ENCODE measurements at regions of chr1 and their contacts with region 1.

Region 1: DNA sequence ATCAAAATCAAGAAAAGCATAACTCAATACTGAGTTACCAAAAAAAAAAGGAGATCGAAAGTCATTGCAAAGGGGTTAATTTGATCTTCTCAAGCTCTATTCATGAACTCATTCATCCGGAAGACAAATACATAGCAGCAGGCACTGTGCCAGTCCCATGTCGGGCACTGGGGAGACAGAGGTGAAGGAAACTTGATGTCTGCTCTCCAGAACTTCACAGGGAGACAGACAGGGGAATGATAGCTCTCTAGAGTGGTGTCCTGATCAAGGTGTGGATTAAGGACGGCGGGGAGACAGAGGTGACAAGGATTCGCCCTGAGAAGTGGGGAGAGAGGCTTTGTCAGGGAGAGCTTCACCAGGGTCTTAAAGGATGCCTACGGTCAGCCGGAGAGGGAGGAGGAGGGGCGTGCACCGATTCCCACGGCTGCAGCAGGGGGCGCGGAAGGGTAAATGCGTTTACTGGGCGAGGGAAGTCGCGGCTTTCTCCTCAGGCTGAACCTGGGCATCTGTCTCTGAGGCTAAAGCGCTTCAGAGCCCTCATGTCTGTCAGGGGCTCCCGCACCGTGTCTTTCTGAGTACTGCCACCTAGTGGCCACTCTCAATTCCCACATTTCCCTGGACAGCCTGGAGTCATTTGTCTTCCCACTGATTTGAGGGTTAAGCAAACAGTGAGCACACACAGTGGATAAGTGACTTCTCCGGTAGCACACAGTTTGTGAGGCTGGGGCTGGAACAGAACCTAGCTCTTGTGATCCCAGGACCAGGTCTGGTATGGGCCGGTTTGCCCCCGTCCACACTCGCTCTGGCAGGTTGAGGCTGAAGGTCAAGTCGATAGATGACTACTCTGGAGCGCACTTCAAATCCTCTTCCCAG is 152.8 kb downstream of the TENT5C start:
- DNase-seq: peak; percentile 72
- H3K4me3 Mint-ChIP-seq: peak overlapping the region; percentile 37
- H3K27ac Mint-ChIP-seq: no peak overlapping the region
- H3K4me1 Mint-ChIP-seq: peaks cover 7% of the 10 kb centered on the region
- H3K27me3 Mint-ChIP-seq: peaks cover 32% of the 10 kb centered on the region

Region 2: DNA sequence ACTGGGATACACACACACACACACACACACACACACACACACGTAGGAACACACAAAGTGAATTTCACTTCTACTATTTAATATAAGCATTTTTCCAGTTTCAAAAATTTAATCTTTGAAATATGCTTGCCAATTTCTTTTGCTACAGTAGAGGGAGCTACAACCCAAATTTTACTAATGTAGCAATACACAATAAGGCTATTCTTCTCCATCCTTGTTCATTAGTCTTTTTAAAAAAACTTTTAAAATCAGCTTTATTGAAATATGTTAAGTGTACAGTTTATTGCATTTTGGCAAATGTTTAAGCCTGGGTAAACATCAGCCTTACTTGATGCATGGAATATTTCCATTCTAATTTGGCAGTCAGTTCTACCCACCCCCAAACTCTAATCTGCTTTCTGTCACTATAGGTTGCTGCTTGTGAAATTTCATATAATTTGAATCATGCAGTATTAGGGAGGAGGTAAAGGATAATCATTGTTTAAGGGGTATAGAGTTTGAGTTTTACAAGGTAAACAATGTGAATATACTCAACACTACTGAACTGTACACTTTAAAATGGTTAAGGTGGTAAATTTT is 245.8 kb before region 1 on chr1:
- CTCF ChIA-PET with region 1: interaction called, 12 read pairs
- POLR2A ChIA-PET with region 1: no interaction called
- DNase-seq: no peak
- H3K4me3 Mint-ChIP-seq: no peak overlapping the region
- H3K27ac Mint-ChIP-seq: no peak overlapping the region
- H3K4me1 Mint-ChIP-seq: peaks cover 2% of the 10 kb centered on the region
- H3K27me3 Mint-ChIP-seq: no peaks in the 10 kb centered on the region

Region 3: GRCh38 chr1:117719004-117719403 is 39.7 kb before region 1 on chr1:
- CTCF ChIA-PET with region 1: no interaction called
- POLR2A ChIA-PET with region 1: no interaction called
- DNase-seq: no peak
- H3K4me3 Mint-ChIP-seq: no peak overlapping the region
- H3K27ac Mint-ChIP-seq: no peak overlapping the region
- H3K4me1 Mint-ChIP-seq: peaks cover 10% of the 10 kb centered on the region
- H3K27me3 Mint-ChIP-seq: peaks cover 24% of the 10 kb centered on the region

Region 4: GRCh38 chr1:117770981-117771531 is 12.4 kb after region 1 on chr1:
- CTCF ChIA-PET with region 1: no interaction called
- POLR2A ChIA-PET with region 1: no interaction called
- DNase-seq: no peak
- H3K4me3 Mint-ChIP-seq: no peak overlapping the region
- H3K27ac Mint-ChIP-seq: no peak overlapping the region
- H3K4me1 Mint-ChIP-seq: no peaks in the 10 kb centered on the region
- H3K27me3 Mint-ChIP-seq: peaks cover 16% of the 10 kb centered on the region